Activated CD8-positive, alpha-beta T cell treated with anti-CD3 and anti-CD28 coated beads, Interleukin-2, amount 10 ng/mL, durations not matched to agents 7 days and 5 days (primary cell): ENCODE measurements at regions of chr14 and their contacts with region 1.

Region 1: GRCh38 chr14:61321385-61322010 is at the start of gene PRKCH:
- DNase-seq: peak; percentile 93
- ATAC-seq: peak; percentile 79
- H3K4me3 Mint-ChIP-seq: peak within 1 kb of the TSS; percentile 94
- H3K27ac Mint-ChIP-seq: peak within 1 kb of the TSS; percentile 92
- H3K4me1 Mint-ChIP-seq: peaks cover 22% of the 10 kb centered on the region
- H3K27me3 Mint-ChIP-seq: no peaks in the 10 kb centered on the region
- total RNA-seq, gene PRKCH: 318 to 343 TPM

Region 2: GRCh38 chr14:61335671-61336275 is 14.3 kb after region 1 on chr14:
- CTCF ChIA-PET with region 1: interaction called, 51 read pairs
- POLR2A ChIA-PET with region 1: interaction called, 223 read pairs
- DNase-seq: peak; percentile 55
- ATAC-seq: peak; percentile 45
- H3K4me3 Mint-ChIP-seq: peak overlapping the region; percentile 74
- H3K27ac Mint-ChIP-seq: peak overlapping the region; percentile 88
- H3K4me1 Mint-ChIP-seq: peaks cover 84% of the 10 kb centered on the region
- H3K27me3 Mint-ChIP-seq: no peaks in the 10 kb centered on the region

Region 3: GRCh38 chr14:61342486-61342885 is 21.0 kb after region 1 on chr14:
- CTCF ChIA-PET with region 1: interaction called, 6 read pairs
- POLR2A ChIA-PET with region 1: interaction called, 223 read pairs
- DNase-seq: peak; percentile 92
- ATAC-seq: peak; percentile 64
- H3K4me3 Mint-ChIP-seq: peak overlapping the region; percentile 72
- H3K27ac Mint-ChIP-seq: peak overlapping the region; percentile 90
- H3K4me1 Mint-ChIP-seq: peaks cover 95% of the 10 kb centered on the region
- H3K27me3 Mint-ChIP-seq: no peaks in the 10 kb centered on the region